Activated CD4-positive, alpha-beta T cell treated with anti-CD3 and anti-CD28 coated beads for 36 hours (primary cell): ENCODE measurements at regions of chr14 and their contacts with region 1.

Region 1: DNA sequence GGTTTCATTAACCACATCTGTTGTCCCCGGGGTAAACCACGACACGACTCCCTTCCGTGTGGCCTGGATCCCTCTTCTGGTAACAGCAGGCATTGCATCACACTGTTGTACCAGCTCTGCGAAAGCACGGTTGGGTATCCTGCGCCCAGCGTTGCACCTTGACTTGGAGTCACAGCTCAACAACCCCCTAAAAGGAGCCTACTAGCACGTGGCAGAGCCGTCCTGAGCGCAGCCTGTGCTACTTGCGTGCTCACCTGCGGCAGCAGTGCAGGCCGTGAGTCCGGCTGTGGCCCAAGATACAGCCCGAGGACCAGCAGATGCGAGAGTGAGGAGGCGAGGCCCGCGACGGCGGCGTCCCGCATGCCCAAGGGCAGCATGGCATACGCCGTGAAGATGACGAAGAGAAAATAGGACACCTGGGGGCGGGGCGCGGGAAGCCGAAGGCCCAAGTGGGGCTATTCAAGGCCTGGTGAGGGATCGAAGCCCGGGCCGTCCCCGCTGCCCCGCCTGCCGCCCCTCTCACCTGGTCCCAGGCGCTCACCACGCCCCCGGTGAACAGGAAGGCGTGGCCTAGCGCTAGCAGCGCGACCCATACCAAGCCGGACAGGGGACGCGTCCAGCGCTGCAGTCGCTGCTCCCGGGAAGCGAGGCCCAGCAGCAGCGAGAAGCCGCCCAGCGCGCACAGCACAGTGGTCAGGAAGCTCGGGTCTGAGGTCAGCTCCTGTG is 2.4 kb downstream of the ADCY4 start:
- DNase-seq: peak; percentile 91
- ATAC-seq: peak; percentile 82
- H3K4me3 Mint-ChIP-seq: peak overlapping the region; percentile 53
- H3K27ac Mint-ChIP-seq: peak overlapping the region; percentile 29
- H3K4me1 Mint-ChIP-seq: peaks cover 27% of the 10 kb centered on the region
- H3K27me3 Mint-ChIP-seq: peaks cover 24% of the 10 kb centered on the region

Region 2: DNA sequence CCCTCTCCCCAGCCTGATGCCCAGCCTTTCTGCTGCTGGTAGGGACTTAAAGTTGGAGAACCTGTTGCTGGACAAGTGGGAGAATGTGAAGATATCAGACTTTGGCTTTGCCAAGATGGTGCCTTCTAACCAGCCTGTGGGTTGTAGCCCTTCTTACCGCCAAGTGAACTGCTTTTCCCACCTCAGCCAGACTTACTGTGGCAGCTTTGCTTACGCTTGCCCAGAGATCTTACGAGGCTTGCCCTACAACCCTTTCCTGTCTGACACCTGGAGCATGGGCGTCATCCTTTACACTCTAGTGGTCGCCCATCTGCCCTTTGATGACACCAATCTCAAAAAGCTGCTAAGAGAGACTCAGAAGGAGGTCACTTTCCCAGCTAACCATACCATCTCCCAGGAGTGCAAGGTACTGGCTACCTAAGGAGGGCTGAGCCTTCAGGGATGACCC is 125.3 kb before region 1 on chr14:
- CTCF ChIA-PET with region 1: no interaction called
- POLR2A ChIA-PET with region 1: no interaction called
- intact Hi-C with region 1: no loop called
- DNase-seq: no peak
- ATAC-seq: no peak
- H3K4me3 Mint-ChIP-seq: no peak overlapping the region
- H3K27ac Mint-ChIP-seq: peak overlapping the region; percentile 13
- H3K4me1 Mint-ChIP-seq: peaks cover 30% of the 10 kb centered on the region
- H3K27me3 Mint-ChIP-seq: no peaks in the 10 kb centered on the region

Region 3: DNA sequence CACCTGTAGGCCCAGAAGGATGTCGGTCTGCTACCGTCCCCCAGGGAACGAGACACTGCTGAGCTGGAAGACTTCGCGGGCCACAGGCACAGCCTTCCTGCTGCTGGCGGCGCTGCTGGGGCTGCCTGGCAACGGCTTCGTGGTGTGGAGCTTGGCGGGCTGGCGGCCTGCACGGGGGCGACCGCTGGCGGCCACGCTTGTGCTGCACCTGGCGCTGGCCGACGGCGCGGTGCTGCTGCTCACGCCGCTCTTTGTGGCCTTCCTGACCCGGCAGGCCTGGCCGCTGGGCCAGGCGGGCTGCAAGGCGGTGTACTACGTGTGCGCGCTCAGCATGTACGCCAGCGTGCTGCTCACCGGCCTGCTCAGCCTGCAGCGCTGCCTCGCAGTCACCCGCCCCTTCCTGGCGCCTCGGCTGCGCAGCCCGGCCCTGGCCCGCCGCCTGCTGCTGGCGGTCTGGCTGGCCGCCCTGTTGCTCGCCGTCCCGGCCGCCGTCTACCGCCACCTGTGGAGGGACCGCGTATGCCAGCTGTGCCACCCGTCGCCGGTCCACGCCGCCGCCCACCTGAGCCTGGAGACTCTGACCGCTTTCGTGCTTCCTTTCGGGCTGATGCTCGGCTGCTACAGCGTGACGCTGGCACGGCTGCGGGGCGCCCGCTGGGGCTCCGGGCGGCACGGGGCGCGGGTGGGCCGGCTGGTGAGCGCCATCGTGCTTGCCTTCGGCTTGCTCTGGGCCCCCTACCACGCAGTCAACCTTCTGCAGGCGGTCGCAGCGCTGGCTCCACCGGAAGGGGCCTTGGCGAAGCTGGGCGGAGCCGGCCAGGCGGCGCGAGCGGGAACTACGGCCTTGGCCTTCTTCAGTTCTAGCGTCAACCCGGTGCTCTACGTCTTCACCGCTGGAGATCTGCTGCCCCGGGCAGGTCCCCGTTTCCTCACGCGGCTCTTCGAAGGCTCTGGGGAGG is 21.5 kb before region 1 on chr14 and contains the start of gene LTB4R:
- CTCF ChIA-PET with region 1: interaction called, 54 read pairs
- POLR2A ChIA-PET with region 1: no interaction called
- intact Hi-C with region 1: loop called in 1 of 2 experiments (anchors 1 kb)
- DNase-seq: peak; percentile 81
- ATAC-seq: peak; percentile 83
- H3K4me3 Mint-ChIP-seq: peak within 1 kb of the TSS; percentile 70
- H3K27ac Mint-ChIP-seq: peak within 1 kb of the TSS; percentile 77
- H3K4me1 Mint-ChIP-seq: peaks cover 61% of the 10 kb centered on the region
- H3K27me3 Mint-ChIP-seq: no peaks in the 10 kb centered on the region
- total RNA-seq, gene LTB4R: 10.1 to 14.2 TPM

Region 4: DNA sequence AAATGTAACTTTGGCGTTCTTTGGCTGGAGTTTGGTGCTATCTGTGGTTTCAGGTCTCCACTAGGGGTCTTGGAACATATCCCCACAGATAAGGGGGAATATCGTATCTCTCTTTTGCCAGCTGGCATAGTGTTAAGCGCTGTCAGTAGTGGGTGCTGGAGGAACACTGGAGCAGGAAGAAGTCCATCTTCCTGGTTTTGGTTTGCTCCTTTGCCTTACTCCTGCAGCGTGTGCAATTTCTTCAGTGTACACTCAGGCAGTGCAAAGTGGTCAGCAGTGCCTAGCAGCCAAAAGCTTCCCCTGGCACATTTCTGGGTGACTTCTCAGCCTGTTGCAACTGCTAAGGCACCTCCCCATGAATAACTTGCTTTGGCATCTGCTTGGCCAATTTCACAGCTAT is 19.1 kb after region 1 on chr14:
- CTCF ChIA-PET with region 1: interaction called, 12 read pairs
- POLR2A ChIA-PET with region 1: interaction called, 4 read pairs
- intact Hi-C with region 1: no loop called
- DNase-seq: no peak
- ATAC-seq: no peak
- H3K4me3 Mint-ChIP-seq: no peak overlapping the region
- H3K27ac Mint-ChIP-seq: no peak overlapping the region
- H3K4me1 Mint-ChIP-seq: peaks cover 4% of the 10 kb centered on the region
- H3K27me3 Mint-ChIP-seq: peaks cover 33% of the 10 kb centered on the region

Region 5: GRCh38 chr14:24411443-24412389 is 79.3 kb after region 1 on chr14:
- CTCF ChIA-PET with region 1: interaction called, 20 read pairs
- POLR2A ChIA-PET with region 1: no interaction called
- intact Hi-C with region 1: no loop called
- DNase-seq: peak; percentile 54
- ATAC-seq: peak; percentile 70
- H3K4me3 Mint-ChIP-seq: no peak overlapping the region
- H3K27ac Mint-ChIP-seq: no peak overlapping the region
- H3K4me1 Mint-ChIP-seq: no peaks in the 10 kb centered on the region
- H3K27me3 Mint-ChIP-seq: no peaks in the 10 kb centered on the region

Region 6: GRCh38 chr14:24425704-24426103 is 93.3 kb after region 1 on chr14:
- CTCF ChIA-PET with region 1: interaction called, 201 read pairs
- POLR2A ChIA-PET with region 1: interaction called, 31 read pairs
- intact Hi-C with region 1: no loop called
- DNase-seq: no peak
- ATAC-seq: no peak
- H3K4me3 Mint-ChIP-seq: no peak overlapping the region
- H3K27ac Mint-ChIP-seq: peak overlapping the region; percentile 70
- H3K4me1 Mint-ChIP-seq: peaks cover 25% of the 10 kb centered on the region
- H3K27me3 Mint-ChIP-seq: no peaks in the 10 kb centered on the region

Region 7: DNA sequence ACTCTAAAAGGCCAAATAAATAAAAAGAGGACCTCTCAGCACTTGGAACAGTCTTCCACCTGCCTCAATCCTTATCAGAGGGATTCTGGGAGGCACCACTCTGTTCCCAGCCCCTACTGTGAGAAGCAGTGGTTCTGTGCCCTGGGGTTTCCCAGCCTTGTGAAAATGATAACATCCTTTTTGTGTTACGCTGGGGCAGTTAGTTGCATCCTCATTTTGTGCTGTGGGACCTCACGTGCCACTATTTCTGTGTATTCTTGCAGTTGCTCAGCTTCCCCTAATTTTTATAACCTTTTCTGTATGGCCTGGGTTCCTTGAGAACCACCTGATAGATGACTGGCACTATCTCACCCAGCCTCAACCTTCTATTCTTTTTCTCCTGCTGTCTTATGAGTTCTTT is 186.4 kb after region 1 on chr14:
- CTCF ChIA-PET with region 1: no interaction called
- POLR2A ChIA-PET with region 1: no interaction called
- intact Hi-C with region 1: no loop called
- DNase-seq: no peak
- ATAC-seq: no peak
- H3K4me3 Mint-ChIP-seq: no peak overlapping the region
- H3K27ac Mint-ChIP-seq: no peak overlapping the region
- H3K4me1 Mint-ChIP-seq: peaks cover 2% of the 10 kb centered on the region
- H3K27me3 Mint-ChIP-seq: peaks cover 7% of the 10 kb centered on the region

Region 8: GRCh38 chr14:24673534-24674203 is 341.2 kb after region 1 on chr14:
- CTCF ChIA-PET with region 1: interaction called, 4 read pairs
- POLR2A ChIA-PET with region 1: no interaction called
- intact Hi-C with region 1: loop called in 1 of 2 experiments (anchors 2 kb)
- DNase-seq: peak; percentile 82
- ATAC-seq: peak; percentile 72
- H3K4me3 Mint-ChIP-seq: peak overlapping the region; percentile 66
- H3K27ac Mint-ChIP-seq: peak overlapping the region; percentile 99
- H3K4me1 Mint-ChIP-seq: peaks cover 85% of the 10 kb centered on the region
- H3K27me3 Mint-ChIP-seq: no peaks in the 10 kb centered on the region